ENCODE measurements at regions of chr10 and their contacts with region 1.

Region 1: GRCh38 chr10:86710987-86711512 is 42.7 kb downstream of the LDB3 start:
- DNase-seq: peak; percentile 86
- H3K4me3 Mint-ChIP-seq: peak overlapping the region; percentile 87
- H3K27ac Mint-ChIP-seq: peak overlapping the region; percentile 93
- H3K4me1 Mint-ChIP-seq: peaks cover 14% of the 10 kb centered on the region
- H3K27me3 Mint-ChIP-seq: no peaks in the 10 kb centered on the region

Region 2: GRCh38 chr10:86635402-86635801 is 75.6 kb before region 1 on chr10:
- CTCF ChIA-PET with region 1: no interaction called
- intact Hi-C with region 1: no loop called
- DNase-seq: no peak
- H3K4me3 Mint-ChIP-seq: no peak overlapping the region
- H3K27ac Mint-ChIP-seq: no peak overlapping the region
- H3K4me1 Mint-ChIP-seq: peaks cover 2% of the 10 kb centered on the region
- H3K27me3 Mint-ChIP-seq: peaks cover 38% of the 10 kb centered on the region

Region 3: DNA sequence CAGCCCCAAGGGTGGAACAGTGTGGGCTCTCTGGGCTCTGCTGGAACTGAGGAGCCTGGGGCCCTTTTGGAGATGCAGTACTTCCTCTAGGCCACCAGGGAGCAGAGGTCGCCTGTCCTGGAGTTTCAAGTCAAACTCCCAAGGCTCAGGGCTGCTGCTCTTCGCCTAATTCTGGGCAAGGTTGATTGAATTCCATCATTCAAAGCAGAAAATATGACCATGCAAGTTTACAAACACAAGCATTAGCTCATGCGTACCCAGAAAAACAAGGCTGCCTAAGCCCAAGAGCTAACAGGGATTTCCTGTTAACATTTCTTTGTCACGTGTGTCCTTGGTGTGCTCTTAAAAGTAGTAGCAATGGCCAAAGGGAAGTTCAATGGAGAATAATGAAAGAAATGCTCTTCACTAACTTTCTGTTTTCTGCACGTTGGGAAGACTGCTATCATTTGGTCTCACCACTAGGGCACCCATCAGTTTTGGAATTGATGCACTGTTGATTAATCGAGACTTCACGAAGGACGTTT is 22.6 kb before region 1 on chr10:
- CTCF ChIA-PET with region 1: interaction called, 3 read pairs
- intact Hi-C with region 1: loop called (anchors 1 kb)
- DNase-seq: peak; percentile 66
- H3K4me3 Mint-ChIP-seq: no peak overlapping the region
- H3K27ac Mint-ChIP-seq: no peak overlapping the region
- H3K4me1 Mint-ChIP-seq: no peaks in the 10 kb centered on the region
- H3K27me3 Mint-ChIP-seq: no peaks in the 10 kb centered on the region

Region 4: DNA sequence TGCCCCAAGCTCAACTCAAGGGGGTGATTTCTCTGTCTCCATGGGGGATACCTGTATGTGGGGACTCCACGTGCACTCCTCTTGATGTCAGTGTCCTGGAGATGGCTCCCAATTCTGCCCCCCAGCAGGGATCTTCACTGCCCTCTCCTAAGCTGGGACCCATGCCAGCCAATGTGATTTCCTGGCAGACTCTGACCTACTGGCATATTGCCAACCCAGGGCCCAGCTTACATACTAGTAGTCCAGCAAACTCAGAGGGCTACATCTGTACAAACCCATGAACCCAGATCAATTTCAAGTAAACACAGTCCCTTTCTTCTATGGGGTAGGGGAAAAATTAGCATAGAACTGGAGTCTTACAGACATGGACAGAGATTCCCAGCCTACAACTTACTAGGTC is 19.2 kb after region 1 on chr10:
- CTCF ChIA-PET with region 1: no interaction called
- intact Hi-C with region 1: no loop called
- DNase-seq: no peak
- H3K4me3 Mint-ChIP-seq: no peak overlapping the region
- H3K27ac Mint-ChIP-seq: no peak overlapping the region
- H3K4me1 Mint-ChIP-seq: no peaks in the 10 kb centered on the region
- H3K27me3 Mint-ChIP-seq: no peaks in the 10 kb centered on the region

Region 5: GRCh38 chr10:86747796-86748581 is 36.9 kb after region 1 on chr10:
- CTCF ChIA-PET with region 1: no interaction called
- intact Hi-C with region 1: no loop called
- DNase-seq: no peak
- H3K4me3 Mint-ChIP-seq: no peak overlapping the region
- H3K27ac Mint-ChIP-seq: no peak overlapping the region
- H3K4me1 Mint-ChIP-seq: no peaks in the 10 kb centered on the region
- H3K27me3 Mint-ChIP-seq: no peaks in the 10 kb centered on the region

Region 6: GRCh38 chr10:86798611-86799010 is 87.6 kb after region 1 on chr10:
- CTCF ChIA-PET with region 1: no interaction called
- intact Hi-C with region 1: loop called (anchors 5 kb)
- DNase-seq: peak; percentile 19
- H3K4me3 Mint-ChIP-seq: no peak overlapping the region
- H3K27ac Mint-ChIP-seq: no peak overlapping the region
- H3K4me1 Mint-ChIP-seq: peaks cover 18% of the 10 kb centered on the region
- H3K27me3 Mint-ChIP-seq: no peaks in the 10 kb centered on the region

Region 7: GRCh38 chr10:86899670-86900276 is 188.7 kb after region 1 on chr10:
- CTCF ChIA-PET with region 1: interaction called, 5 read pairs
- intact Hi-C with region 1: loop called (anchors 1 kb)
- DNase-seq: peak; percentile 63
- H3K4me3 Mint-ChIP-seq: no peak overlapping the region
- H3K27ac Mint-ChIP-seq: no peak overlapping the region
- H3K4me1 Mint-ChIP-seq: no peaks in the 10 kb centered on the region
- H3K27me3 Mint-ChIP-seq: no peaks in the 10 kb centered on the region

Region 8: DNA sequence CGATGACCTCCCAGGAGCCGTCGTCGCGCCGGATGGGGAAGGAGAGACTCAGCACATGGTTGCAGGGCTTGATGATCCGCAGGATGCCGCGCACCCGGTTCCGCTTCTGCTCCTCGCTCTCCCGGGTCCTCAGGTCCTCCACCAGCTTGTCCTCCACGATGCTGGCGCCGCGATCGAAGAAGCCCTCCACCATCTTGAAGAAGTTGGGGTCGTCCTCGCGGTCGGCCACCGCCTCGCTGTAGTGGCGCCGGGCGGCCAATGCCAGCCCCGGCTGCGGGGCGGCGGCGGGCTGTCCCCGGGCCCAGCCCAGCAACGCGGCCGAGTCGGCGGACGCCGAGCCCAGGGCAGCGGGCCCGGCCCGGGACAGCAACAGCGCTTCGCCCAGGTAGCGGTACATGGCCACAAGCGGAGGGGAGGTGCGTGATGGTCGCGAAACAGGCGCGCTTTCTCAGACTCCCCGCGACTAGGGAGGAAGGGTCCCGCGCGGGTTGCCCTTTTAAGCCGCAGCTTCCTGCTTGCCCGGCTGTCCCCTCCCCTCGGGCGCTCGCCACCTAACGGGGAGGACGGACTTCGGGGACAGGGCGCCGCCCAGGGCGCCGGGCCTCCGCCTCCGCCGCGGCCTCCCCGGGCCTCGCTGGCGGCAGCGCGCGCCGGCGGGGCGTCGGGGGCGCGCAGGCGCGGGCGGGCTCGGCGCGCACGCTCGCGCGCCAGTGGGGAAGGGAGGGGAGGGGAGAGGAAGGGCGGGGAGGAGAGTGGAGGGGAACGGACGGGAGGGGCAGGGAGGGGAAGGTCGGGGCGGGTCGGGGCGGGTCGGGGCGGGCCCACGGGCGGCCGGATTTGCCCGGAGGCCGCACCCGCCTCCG is 383.6 kb after region 1 on chr10 and contains the starts of genes GLUD1 and SHLD2:
- CTCF ChIA-PET with region 1: no interaction called
- intact Hi-C with region 1: loop called (anchors 10 kb)
- DNase-seq: peak; percentile 93
- H3K4me3 Mint-ChIP-seq: peak within 1 kb of the TSS; percentile 96
- H3K27ac Mint-ChIP-seq: peak within 1 kb of the TSS; percentile 92
- H3K4me1 Mint-ChIP-seq: peaks cover 42% of the 10 kb centered on the region
- H3K27me3 Mint-ChIP-seq: no peaks in the 10 kb centered on the region
- total RNA-seq, gene GLUD1: 166 to 168 TPM
- total RNA-seq, gene SHLD2: 16.7 to 17.6 TPM

Measured in activated naive CD4-positive, alpha-beta T cell treated with anti-CD3 and anti-CD28 coated beads for 36 hours (primary cell).